Right cardiac atrium (tissue), 5 donors: ENCODE measurements at regions of chr1 and their contacts with region 1.

Region 1: DNA sequence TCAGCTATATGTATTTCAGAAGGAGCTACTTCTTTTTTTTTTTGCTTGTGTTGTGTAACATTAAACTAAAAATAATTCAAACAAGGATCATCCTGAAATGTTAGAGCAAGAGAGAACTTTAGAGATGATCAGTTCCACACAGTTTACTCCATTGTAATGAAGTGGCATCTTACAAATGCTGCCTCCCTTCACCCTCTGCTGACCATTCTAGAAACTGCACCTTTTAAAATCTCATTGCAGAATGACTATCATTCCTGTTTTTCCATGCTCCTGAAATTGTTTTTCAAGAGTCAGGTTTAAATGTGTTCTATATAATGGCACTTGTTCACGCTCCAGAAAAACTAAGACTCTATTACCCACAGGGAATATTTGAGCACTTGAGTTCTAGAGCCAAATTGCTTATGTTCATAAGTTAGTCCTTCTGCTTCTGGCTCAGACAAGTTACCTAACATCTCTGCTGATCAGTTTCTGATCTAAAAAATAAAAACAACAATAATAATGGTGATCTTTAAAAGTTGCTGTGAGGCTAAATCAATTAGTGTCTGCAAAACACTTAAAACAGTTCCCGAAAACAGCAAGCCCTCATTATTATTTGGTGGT is 21.5 kb upstream of the SLC44A5 start:
- DNase-seq: no peak
- ATAC-seq: peak; percentile 31 to 70
- H3K4me3 ChIP-seq: no peak overlapping the region
- H3K27ac ChIP-seq: no peak overlapping the region
- H3K4me1 ChIP-seq: no peaks in the 10 kb centered on the region
- H3K27me3 ChIP-seq: no peaks in the 10 kb centered on the region

Region 2: GRCh38 chr1:75257424-75257823 is 375.0 kb before region 1 on chr1:
- intact Hi-C with region 1: loop called in 2 of 4 experiments (anchors 5 kb)
- DNase-seq: no peak
- ATAC-seq: no peak
- H3K4me3 ChIP-seq: no peak overlapping the region
- H3K27ac ChIP-seq: no peak overlapping the region
- H3K4me1 ChIP-seq: no peaks in the 10 kb centered on the region
- H3K27me3 ChIP-seq: no peaks in the 10 kb centered on the region

Region 3: GRCh38 chr1:75265792-75266191 is 366.7 kb before region 1 on chr1:
- intact Hi-C with region 1: loop called (anchors 5 to 10 kb)
- DNase-seq: no peak
- ATAC-seq: peak in 1 of 2 donors; percentile 32
- H3K4me3 ChIP-seq: no peak overlapping the region
- H3K27ac ChIP-seq: no peak overlapping the region
- H3K4me1 ChIP-seq: no peaks in the 10 kb centered on the region
- H3K27me3 ChIP-seq: no peaks in the 10 kb centered on the region